Adrenal gland (tissue), 19 donors: ENCODE measurements at regions of chr1 and their contacts with region 1.

Region 1: GRCh38 chr1:109624201-109625010 is 4.8 kb downstream of the AMPD2 start:
- DNase-seq: peak in 3 of 7 donors; percentile 7 to 61 (median 25)
- H3K4me3 ChIP-seq: no peak overlapping the region
- H3K27ac ChIP-seq: peak overlapping the region in 2 of 5 donors; percentile 59 to 67
- H3K4me1 ChIP-seq: peaks cover 12 to 42% of the 10 kb centered on the region in 2 donors
- H3K27me3 ChIP-seq: no peaks in the 10 kb centered on the region
- CTCF ChIP-seq: no peak
- POLR2A ChIP-seq: no peak

Region 2: DNA sequence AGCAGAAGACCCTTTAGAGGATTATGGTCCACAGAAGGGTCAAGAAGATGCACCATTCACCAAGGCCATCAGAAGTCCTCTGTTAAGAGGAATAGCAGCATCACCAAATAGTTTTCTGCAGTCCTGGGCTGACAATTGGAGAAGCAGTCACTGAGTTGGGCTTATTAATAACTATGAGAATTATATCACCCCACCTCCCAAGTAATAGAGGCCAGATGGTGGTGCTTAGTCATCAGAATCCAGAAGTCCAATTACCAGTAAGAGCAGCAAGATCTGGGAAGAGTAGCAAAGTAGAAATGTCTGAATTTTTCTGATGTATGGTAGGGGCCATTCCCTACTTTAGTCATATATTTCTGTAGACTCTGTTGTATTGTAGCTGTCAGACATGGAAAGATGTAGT is 192.1 kb before region 1 on chr1:
- intact Hi-C with region 1: no loop called
- DNase-seq: no peak
- H3K4me3 ChIP-seq: no peak overlapping the region
- H3K27ac ChIP-seq: no peak overlapping the region
- H3K4me1 ChIP-seq: peaks cover 4 to 6% of the 10 kb centered on the region in 2 donors
- H3K27me3 ChIP-seq: no peaks in the 10 kb centered on the region
- CTCF ChIP-seq: no peak
- POLR2A ChIP-seq: no peak

Region 3: DNA sequence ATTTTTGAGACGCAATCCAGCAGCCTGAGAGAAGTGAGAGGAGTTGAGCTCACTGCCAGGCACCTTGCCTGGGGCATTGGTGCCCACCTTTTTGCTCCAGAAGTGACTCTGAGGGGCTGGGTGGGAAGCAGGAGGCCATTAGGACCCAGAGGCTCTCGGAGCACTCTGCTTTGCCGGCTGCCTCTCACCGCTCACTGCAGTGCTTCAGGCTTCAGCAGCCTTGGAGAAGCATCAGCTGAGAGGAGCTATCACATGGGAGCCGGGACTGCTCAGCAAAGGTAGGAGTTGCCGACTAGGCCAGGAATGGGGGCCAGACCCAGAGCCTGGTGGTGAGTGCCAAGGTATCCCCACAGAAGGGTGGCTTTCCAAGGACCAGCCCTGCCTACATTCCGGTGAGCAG is 84.7 kb before region 1 on chr1 and contains the start of gene GPR61:
- intact Hi-C with region 1: loop called in 1 of 2 experiments (anchors 5 kb)
- DNase-seq: peak in 2 of 7 donors; percentile 42 to 74
- H3K4me3 ChIP-seq: no peak within 1 kb of the TSS
- H3K27ac ChIP-seq: no peak within 1 kb of the TSS
- H3K4me1 ChIP-seq: peaks cover 0 to 3% of the 10 kb centered on the region in 2 donors
- H3K27me3 ChIP-seq: no peaks in the 10 kb centered on the region
- CTCF ChIP-seq: no peak
- POLR2A ChIP-seq: no peak
- total RNA-seq, gene GPR61: 0.11 to 4.9 (median 0.57) TPM in 7 of 9 donors, not detected in the others

Region 4: DNA sequence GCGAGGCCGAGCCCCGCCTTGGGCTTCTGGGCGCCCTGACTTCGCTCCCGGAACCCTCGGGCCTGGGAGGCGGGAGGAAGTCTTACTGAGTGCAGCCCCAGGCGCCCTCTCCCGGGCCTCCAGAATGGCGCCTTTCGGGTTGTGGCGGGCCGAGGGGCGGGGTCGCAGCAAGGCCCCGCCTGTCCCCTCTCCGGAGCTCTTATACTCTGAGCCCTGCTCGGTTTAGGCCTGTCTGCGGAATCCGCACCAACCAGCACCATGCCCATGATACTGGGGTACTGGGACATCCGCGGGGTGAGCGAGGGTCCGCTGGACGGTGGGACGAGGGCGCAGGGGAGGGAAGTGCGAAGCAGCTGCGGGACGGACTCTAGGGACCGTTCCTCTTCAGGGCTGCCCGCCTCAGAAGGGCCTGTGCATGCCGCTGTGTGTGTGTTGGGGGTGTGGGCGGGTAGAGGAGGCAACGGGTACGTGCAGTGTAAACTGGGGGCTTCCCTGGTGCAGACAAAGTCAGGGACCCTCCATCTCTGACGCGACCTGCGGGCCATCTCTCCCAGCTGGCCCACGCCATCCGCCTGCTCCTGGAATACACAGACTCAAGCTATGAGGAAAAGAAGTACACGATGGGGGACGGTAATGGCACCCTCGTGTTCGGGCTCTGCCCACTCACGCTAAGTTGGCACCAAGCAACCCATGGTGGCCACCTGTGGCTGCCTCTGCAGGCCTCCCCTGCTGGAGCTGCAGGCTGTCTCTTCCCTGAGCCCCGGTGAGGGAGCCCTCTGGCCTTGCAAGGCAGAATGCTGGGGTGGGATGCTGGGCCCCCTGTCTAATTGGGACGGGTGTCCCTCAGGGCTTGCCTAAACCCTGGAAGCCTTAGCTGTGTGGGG is 63.5 kb after region 1 on chr1 and contains the start of gene GSTM1:
- intact Hi-C with region 1: no loop called
- DNase-seq: peak in 2 of 7 donors; percentile 78 to 90
- H3K4me3 ChIP-seq: peak within 1 kb of the TSS in 1 of 4 donors; percentile 61
- H3K27ac ChIP-seq: peak within 1 kb of the TSS in 2 of 5 donors; percentile 86 to 90
- H3K4me1 ChIP-seq: peaks cover 0 to 42% of the 10 kb centered on the region in 2 donors
- H3K27me3 ChIP-seq: no peaks in the 10 kb centered on the region
- CTCF ChIP-seq: peak in 2 of 6 experiments; percentile 49 to 52
- POLR2A ChIP-seq: peak in 1 of 2 donors; percentile 17
- total RNA-seq, gene GSTM1: 0.11 to 301 (median 75.1) TPM in 4 of 9 donors, not detected in the others

Region 5: GRCh38 chr1:109793486-109794318 is 169.3 kb after region 1 on chr1:
- intact Hi-C with region 1: no loop called
- DNase-seq: peak in 4 of 7 donors; percentile 21 to 66 (median 36)
- H3K4me3 ChIP-seq: no peak overlapping the region
- H3K27ac ChIP-seq: peak overlapping the region in 1 of 5 donors; percentile 38
- H3K4me1 ChIP-seq: peaks cover 11 to 34% of the 10 kb centered on the region in 2 donors
- H3K27me3 ChIP-seq: no peaks in the 10 kb centered on the region
- CTCF ChIP-seq: no peak
- POLR2A ChIP-seq: no peak